ENCODE measurements at regions of chr11 and their contacts with region 1.

Region 1: DNA sequence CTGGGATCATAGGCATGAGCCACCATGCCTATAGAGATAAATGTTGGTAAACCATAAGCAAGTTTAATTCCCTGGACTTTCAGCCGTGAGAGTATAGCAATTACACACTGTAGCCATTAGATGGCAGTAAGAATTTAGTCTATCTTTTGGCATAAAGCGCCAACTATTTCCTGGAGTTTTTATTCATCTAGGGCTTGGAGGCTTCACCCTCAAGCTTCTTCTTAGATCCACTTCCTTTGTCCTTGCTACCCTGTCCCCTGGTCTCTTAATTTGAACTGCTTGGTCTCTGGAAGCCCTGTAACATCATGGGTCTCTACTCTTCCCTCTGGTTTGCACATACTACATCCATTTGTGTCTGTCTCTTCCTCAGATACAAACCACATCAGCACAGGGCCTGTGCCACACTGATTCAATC is 38.2 kb downstream of the OR10A6 start:
- DNase-seq: no peak
- H3K4me3 ChIP-seq: no peak overlapping the region
- H3K27ac ChIP-seq: no peak overlapping the region
- H3K4me1 ChIP-seq: no peaks in the 10 kb centered on the region
- H3K27me3 ChIP-seq: no peaks in the 10 kb centered on the region
- CTCF ChIP-seq: peak; percentile 35 to 77 (median 75)

Region 2: DNA sequence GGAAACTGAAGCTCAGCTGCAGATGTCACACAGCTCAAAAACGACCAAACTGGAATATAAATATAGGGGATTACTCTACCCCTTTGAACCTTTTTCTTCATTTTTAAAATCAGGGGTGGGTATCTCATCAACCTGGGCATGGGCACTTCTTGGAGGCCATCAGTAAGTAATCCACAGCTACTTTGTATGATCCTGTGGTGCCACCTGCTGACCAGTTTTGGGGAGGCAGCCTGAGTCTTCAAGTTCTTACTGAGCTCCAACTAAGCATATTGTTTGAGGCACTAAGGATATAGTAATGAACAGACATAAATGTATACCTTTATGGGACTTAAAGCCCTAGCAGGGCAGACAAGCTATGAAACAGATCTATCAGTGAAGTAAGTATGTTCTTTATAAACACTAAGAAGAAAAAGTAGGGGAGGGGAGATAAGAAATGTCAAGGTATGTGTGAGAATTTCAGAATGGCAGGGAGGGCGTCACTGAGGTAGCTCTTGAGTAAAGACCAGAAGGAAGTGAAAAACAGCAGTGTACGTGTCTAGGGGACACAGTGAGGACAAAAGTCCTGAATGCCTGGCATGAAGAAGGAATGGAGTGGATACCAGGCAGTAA is 206.5 kb after region 1 on chr11:
- intact Hi-C with region 1: loop called (anchors 2 kb)
- DNase-seq: peak in 1 of 2 donors; percentile 86
- H3K4me3 ChIP-seq: no peak overlapping the region
- H3K27ac ChIP-seq: no peak overlapping the region
- H3K4me1 ChIP-seq: no peaks in the 10 kb centered on the region
- H3K27me3 ChIP-seq: no peaks in the 10 kb centered on the region
- CTCF ChIP-seq: peak; percentile 59 to 77 (median 65)